ENCODE measurements at regions of chr19 and their contacts with region 1.

Region 1: DNA sequence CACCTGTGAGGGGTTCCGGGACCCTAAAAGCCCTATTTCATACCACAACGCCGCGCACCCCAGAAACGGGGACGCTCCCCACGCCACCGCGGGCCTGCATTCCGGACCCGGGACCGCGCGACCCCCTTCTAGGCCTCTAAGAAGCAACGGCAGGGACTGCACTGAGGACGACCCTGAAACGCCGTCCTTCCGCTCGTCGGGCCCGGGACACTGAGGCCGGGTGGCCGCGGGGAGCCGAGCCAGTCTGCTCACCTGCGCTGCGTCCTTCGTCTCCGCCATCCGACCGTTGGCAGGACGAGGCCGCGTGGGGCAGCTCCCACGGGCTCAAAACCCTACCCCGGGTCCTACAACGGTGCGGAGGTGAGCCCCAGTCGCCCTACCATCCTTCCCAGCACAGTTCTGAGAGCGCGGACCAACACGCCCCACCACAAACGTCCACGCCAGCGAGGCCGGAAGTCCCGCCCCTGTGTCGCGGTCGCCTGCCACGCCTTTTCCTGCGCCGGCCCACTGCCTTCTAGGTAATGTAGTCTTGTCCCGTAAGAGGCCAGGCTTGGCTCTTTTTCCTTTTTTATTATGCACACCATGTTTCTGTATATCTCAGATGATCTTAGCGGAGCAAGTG is at the start of gene ZNF550:
- DNase-seq: peak; percentile 71 to 85 (median 84)
- ATAC-seq: peak; percentile 99
- H3K4me3 ChIP-seq: peak within 1 kb of the TSS; percentile 89
- H3K4me3 Mint-ChIP-seq: peak within 1 kb of the TSS; percentile 87 to 99 (median 98)
- H3K27ac ChIP-seq: peak within 1 kb of the TSS; percentile 82
- H3K27ac Mint-ChIP-seq: peak within 1 kb of the TSS; percentile 81 to 96 (median 91)
- H3K4me1 ChIP-seq: peaks cover 16 to 19% of the 10 kb centered on the region in 2 donors
- H3K4me1 Mint-ChIP-seq: peaks cover 21 to 45% (median 33%) of the 10 kb centered on the region in 7 donors
- H3K27me3 ChIP-seq: no peaks in the 10 kb centered on the region
- H3K27me3 Mint-ChIP-seq: peaks cover 0 to 16% (median 4%) of the 10 kb centered on the region in 5 donors
- total RNA-seq, gene ZNF550: 12.9 to 56.2 (median 23.5) TPM

Region 2: DNA sequence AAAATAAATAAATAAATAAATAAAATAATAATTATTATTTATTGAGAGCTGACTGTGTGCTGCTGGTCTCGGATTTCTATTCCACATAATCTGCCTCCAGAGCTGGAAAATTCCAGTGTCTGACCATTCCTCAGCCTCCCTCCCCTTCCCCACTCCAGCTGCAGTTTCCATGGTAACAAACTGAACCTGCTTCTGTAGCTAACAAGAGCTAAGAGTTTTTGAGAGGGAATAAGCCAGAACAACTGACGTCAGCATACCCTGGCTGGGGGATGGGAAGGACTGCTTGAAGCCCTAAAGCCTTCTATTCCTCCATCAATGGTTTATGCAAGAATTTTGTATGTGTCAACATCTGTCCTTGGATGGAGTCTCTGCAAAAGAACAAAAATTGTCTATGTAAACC is 693.0 kb before region 1 on chr19:
- CTCF ChIA-PET with region 1: no interaction called
- POLR2A ChIA-PET with region 1: no interaction called
- intact Hi-C with region 1: no loop called
- DNase-seq: no peak
- ATAC-seq: no peak
- H3K4me3 ChIP-seq: no peak overlapping the region
- H3K4me3 Mint-ChIP-seq: no peak overlapping the region
- H3K27ac ChIP-seq: no peak overlapping the region
- H3K27ac Mint-ChIP-seq: no peak overlapping the region
- H3K4me1 ChIP-seq: no peaks in the 10 kb centered on the region
- H3K4me1 Mint-ChIP-seq: no peaks in the 10 kb centered on the region
- H3K27me3 ChIP-seq: no peaks in the 10 kb centered on the region
- H3K27me3 Mint-ChIP-seq: no peaks in the 10 kb centered on the region

Region 3: DNA sequence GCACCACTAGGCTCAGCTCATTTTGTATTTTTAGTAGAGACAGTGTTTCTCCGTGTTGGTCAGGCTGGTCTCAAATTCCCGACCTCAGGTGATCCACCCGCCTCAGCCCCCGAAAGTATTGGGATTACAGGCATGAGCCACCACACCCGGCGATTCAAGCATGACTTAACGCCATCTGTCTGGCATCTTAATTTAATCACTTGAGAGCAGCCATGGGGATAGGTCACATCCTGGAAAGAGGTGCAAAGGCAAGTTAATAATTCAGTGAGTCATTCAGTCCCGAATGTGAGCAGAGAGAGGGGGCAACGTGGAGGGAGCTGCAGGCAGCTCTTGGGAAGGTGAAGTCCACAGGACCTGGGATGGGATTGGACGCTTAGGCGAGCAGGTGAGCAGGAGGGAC is 471.4 kb before region 1 on chr19:
- CTCF ChIA-PET with region 1: no interaction called
- POLR2A ChIA-PET with region 1: no interaction called
- intact Hi-C with region 1: no loop called
- DNase-seq: no peak
- ATAC-seq: no peak
- H3K4me3 ChIP-seq: no peak overlapping the region
- H3K4me3 Mint-ChIP-seq: no peak overlapping the region
- H3K27ac ChIP-seq: no peak overlapping the region
- H3K27ac Mint-ChIP-seq: no peak overlapping the region
- H3K4me1 ChIP-seq: no peaks in the 10 kb centered on the region
- H3K4me1 Mint-ChIP-seq: peaks cover 0 to 2% (median 0%) of the 10 kb centered on the region in 7 donors
- H3K27me3 ChIP-seq: no peaks in the 10 kb centered on the region
- H3K27me3 Mint-ChIP-seq: peaks cover 0 to 4% (median 0%) of the 10 kb centered on the region in 5 donors

Region 4: DNA sequence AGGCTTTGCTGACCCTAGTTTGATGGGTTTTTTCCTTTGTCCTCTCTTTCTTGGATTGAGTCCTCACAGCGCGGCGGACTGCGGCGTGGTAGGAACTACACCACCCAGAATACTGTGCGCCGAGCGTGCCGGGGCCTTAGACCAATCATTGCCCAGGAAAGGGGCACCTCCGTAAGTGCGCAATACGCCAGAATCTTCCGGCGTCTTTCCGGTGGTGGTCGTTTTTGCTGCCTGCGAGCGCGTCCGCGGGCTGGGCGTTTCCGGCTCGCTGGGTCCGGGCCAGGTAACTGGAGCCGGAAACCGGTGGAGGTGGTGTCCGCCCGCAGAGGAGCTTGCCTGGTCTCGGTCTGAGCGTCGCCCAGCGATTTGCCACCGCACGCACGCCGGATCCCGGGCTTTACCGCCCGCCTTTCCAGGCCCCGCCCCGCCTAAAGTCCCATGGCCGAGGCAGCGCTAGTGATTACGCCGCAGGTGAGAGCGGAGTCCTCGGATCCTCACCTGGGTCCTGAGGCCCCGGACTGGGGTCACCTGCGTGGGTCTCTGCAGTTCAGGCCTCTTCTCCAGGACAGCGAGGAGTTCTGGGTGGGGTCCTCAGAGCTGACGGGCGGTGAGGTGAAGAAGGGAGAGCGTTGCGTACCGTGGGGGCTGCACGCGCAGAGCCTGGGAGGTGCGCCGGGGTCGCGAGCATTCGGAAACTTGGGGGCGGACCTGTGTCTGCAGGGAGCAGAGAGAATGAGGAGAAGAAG is 32.2 kb before region 1 on chr19 and contains the start of gene ZNF549:
- CTCF ChIA-PET with region 1: no interaction called
- POLR2A ChIA-PET with region 1: interaction called, 4 read pairs
- intact Hi-C with region 1: loop called (anchors 1 kb)
- DNase-seq: peak; percentile 65 to 90 (median 88)
- ATAC-seq: peak; percentile 99
- H3K4me3 ChIP-seq: peak within 1 kb of the TSS; percentile 98
- H3K4me3 Mint-ChIP-seq: peak within 1 kb of the TSS; percentile 89 to 98 (median 96)
- H3K27ac ChIP-seq: peak within 1 kb of the TSS; percentile 94
- H3K27ac Mint-ChIP-seq: peak within 1 kb of the TSS; percentile 80 to 98 (median 95)
- H3K4me1 ChIP-seq: peaks cover 14 to 18% of the 10 kb centered on the region in 2 donors
- H3K4me1 Mint-ChIP-seq: peaks cover 15 to 36% (median 32%) of the 10 kb centered on the region in 7 donors
- H3K27me3 ChIP-seq: no peaks in the 10 kb centered on the region
- H3K27me3 Mint-ChIP-seq: peaks cover 0 to 4% (median 0%) of the 10 kb centered on the region in 5 donors
- total RNA-seq, gene ZNF549: 6.9 to 24.8 (median 11.3) TPM

Measured in naive thymus-derived CD4-positive, alpha-beta T cell (primary cell).